ENCODE measurements at regions of chr3 and their contacts with region 1.

Region 1: GRCh38 chr3:130857326-130858026 is 36.4 kb upstream of the ATP2C1 start:
- DNase-seq: peak; percentile 71
- H3K4me3 ChIP-seq: no peak overlapping the region
- H3K27ac ChIP-seq: no peak overlapping the region
- H3K4me1 ChIP-seq: no peaks in the 10 kb centered on the region
- H3K27me3 ChIP-seq: no peaks in the 10 kb centered on the region
- CTCF ChIP-seq: no peak

Region 2: DNA sequence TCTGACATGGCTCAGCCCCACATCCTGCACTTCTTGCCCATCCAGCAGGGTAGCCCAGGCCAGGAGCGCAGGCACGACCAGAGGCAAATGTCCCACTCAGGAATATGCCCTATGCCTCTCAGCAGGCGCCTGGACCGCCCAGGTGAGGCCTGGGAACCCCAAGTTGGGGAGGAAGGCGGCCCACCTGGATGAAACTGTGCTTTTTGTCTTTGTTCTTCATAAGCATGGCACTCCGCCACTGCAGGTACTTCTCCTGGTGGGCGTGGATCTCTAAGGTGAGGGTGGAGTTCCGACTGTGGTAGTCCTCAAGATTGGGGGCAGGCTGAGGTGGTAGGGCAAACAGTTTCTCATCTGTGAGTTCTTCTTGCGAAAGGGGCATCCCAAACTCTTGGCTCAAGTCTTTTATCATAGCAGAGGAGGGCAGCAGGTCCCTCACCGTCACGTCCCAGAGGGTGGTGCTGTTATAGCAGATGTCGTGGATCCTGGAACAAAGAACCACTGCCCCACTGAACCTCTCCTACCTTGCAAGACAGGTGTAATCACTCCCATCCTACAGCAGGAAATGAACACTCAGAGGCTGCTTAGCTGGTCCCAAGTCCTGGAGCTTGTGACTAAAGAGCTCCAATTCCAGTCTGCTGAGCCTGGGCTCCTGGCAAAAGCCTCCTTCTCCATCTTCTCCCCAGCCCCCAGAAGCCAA is 1924.8 kb before region 1 on chr3:
- CTCF ChIA-PET with region 1: no interaction called
- dilution Hi-C with region 1: no loop called
- in situ Hi-C with region 1: no loop called
- intact Hi-C with region 1: no loop called
- DNase-seq: no peak
- H3K4me3 ChIP-seq: no peak overlapping the region
- H3K27ac ChIP-seq: no peak overlapping the region
- H3K4me1 ChIP-seq: peaks cover 4% of the 10 kb centered on the region
- H3K27me3 ChIP-seq: no peaks in the 10 kb centered on the region
- CTCF ChIP-seq: no peak

Region 3: GRCh38 chr3:130783629-130784028 is 73.8 kb before region 1 on chr3:
- CTCF ChIA-PET with region 1: no interaction called
- dilution Hi-C with region 1: loop called (anchors 5 kb)
- in situ Hi-C with region 1: no loop called
- intact Hi-C with region 1: no loop called
- DNase-seq: peak; percentile 74
- H3K4me3 ChIP-seq: no peak overlapping the region
- H3K27ac ChIP-seq: no peak overlapping the region
- H3K4me1 ChIP-seq: peaks cover 4% of the 10 kb centered on the region
- H3K27me3 ChIP-seq: no peaks in the 10 kb centered on the region
- CTCF ChIP-seq: no peak

Region 4: DNA sequence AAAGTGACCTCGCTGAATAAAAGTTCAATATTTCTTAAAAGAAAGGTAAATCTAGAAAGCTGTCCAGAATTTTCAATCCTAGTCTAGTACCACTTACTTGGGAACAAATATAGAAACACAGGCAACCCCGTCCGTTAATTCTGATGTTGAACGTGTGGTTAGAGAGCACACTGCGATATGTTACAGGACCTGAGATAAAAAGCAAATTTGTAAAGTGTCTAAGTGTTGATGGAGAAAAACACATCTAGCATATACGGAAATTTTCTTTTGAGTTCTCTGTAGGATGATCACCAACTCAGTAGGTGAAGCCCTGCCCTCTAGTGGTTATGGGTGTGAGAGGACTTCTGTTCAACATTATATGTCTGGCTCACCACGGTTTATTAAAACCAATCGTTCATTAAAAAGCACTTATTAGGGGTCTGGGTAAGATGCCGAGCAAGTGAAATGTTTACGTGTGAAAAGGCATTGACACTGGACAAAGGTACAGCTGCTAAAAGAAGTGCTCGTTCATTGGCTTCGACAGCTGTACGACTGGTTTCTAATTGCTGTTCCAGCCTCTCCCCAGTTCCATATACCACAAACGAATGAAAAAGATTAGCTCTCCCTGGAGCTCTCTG is 35.4 kb after region 1 on chr3:
- CTCF ChIA-PET with region 1: no interaction called
- dilution Hi-C with region 1: no loop called
- in situ Hi-C with region 1: no loop called
- intact Hi-C with region 1: no loop called
- DNase-seq: peak; percentile 74
- H3K4me3 ChIP-seq: peak overlapping the region; percentile 51 to 79 (median 77)
- H3K27ac ChIP-seq: peak overlapping the region; percentile 89
- H3K4me1 ChIP-seq: peaks cover 13% of the 10 kb centered on the region
- H3K27me3 ChIP-seq: no peaks in the 10 kb centered on the region
- CTCF ChIP-seq: peak; percentile 86 to 97